Cardiac septum (tissue), 1 donor: ENCODE measurements at regions of chr14 and their contacts with region 1.

Region 1: DNA sequence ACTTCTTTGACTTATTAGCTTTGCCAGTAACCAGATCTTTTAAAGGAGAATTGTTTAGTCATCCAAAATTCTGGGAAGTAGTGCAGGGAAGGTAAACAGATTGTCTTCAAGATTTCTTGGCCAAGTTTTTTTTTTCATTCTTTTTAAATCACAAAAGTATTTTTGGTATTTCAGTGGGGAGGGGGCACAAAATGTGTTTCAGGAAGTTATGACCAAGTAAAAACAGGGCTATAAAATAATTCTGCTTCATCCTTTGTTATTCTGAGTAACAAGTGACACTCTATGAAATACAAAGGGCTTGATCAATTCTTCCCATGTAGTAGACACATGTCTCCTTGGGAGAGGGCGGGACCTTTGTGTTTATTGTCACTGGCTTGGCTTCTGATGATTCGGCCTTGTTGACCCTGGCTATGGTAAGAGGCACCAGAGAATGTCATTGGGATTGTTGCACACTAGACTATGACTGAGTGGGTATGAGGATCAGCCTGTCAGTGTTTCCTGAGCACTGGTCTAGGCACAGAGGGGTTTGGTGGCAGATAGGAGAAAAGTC is 55.4 kb downstream of the SUSD6 start:
- DNase-seq: no peak

Region 2: GRCh38 chr14:69519204-69520100 is 147.3 kb before region 1 on chr14:
- intact Hi-C with region 1: no loop called
- DNase-seq: peak; percentile 7

Region 3: DNA sequence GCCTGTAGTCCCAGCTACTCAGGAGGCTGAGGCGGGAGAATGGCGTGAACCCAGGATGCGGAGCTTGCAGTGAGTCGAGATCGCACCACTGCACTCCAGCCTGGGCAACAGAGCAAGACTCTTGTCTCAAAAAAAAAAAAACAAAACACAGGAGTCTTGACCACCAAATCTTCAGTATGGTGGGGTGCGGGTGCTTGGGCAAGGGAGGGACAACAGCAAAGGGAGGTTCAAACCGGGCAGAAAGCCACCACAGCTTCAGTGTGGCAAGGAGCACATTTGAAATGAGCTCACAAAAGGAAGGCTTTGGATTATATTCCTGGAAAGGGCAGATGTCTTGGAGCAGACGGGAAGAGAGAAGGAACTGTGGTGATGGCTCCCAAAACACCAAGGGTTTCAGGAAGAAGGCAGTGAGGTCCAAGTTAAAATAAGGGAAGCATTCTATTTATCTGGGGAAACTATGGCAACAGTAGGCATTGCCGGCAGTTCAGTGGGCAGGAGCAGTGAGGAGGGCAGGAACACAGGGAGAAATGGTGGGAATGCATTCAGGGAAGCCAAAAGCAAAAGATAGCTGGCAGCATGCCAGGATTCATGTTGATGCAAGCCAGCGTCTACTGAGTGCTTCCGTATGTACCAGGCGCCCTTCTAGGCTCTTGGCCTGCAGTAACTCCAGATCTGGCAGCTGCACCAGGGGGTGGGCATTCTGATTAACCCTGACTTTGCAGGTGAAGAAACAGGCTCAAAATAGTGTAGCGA is 49.1 kb after region 1 on chr14:
- intact Hi-C with region 1: loop called (anchors 10 kb)
- DNase-seq: peak; percentile 84